Heart right ventricle (tissue), 16 donors: ENCODE measurements at regions of chr3 and their contacts with region 1.

Region 1: DNA sequence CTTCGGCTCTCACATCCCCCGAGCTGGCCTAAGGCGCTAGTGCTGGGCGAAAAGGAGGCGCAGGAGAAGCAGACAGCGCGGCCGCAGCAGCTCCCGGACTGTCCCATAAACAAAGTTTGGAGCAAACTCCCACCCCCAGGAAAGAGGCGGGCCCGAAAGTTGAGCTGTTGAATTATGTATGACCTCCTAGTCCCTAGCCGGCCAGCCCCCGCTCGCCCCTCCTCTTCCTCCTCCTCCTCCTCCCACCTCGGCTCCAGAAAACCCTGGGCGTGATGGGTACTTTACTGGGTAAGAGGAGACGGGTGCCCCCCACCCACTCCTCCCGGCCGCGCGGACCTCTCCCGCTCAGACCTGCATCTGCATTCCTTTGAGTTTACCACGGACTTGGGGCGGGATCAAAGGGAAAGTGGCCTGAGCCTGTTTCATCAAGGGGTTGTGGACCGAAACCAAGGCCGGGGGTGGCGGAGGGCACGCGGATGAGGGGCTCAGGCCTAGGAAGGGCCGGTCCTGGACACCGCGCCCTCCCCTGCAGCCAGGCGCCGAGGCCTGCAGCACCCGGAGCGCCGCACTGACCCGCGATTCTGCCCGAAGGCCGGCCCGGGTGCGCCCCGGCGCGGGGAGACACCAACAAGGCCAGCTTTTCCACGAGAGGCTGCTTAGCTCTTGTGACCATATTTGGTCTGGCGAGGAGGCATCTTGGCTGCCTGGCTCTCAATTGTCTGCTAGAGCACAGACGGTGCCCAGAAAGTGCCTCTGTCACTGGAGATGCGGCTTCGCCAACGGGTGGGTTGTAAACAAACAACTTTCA is at the start of gene WWTR1:
- DNase-seq: peak; percentile 91 to 97
- ATAC-seq: peak; percentile 88 to 95 (median 92)
- H3K4me3 ChIP-seq: peak within 1 kb of the TSS; percentile 45 to 96 (median 87)
- H3K27ac ChIP-seq: peak within 1 kb of the TSS; percentile 95 to 99 (median 98)
- H3K4me1 ChIP-seq: peaks cover 2 to 53% (median 44%) of the 10 kb centered on the region in 9 donors
- H3K27me3 ChIP-seq: peaks cover 0 to 58% (median 0%) of the 10 kb centered on the region in 7 donors
- CTCF ChIP-seq: peak in 6 of 9 donors; percentile 12 to 62 (median 44)
- total RNA-seq, gene WWTR1: 30.3 to 78.6 (median 43.7) TPM

Region 2: DNA sequence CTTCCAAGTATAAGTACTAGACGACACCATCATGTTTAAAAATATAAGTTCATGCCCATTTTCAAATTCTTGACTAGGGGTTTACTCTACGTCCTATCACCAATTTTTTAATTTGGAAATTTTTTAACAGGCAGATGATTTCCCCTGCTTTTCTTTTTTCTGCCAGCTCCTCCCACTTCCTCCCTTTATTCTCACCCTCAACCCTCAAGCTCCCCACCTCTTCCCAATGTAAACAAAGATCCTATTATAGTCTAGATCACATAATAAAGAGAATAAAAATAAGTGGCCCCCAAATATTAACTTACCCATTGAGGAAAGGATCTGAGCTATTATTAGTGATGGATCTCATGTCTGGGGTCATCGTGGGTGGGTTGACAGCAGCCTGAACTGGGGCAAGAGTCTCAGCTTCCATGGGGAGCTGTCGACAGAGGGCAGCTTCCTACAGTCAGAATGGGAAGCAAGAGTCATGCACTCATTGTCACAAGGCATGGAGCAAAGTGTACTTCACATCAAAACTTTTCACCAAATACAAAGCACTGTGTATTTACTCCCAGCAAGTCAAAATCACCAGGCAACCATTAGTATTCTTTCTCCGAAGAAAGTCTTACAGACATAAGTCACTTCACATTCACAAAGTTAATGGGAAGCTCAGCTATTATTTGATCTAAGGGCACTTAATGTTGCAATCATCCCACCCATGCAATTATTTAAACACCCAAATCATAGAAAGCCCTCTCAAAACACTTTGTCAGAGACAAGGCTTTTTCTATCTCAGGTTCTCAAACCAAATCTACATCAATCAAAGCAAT is 130.4 kb before region 1 on chr3:
- intact Hi-C with region 1: loop called in 9 of 10 experiments (anchors 2 to 10 kb)
- DNase-seq: peak in 1 of 2 donors; percentile 36
- ATAC-seq: peak; percentile 65 to 86 (median 70)
- H3K4me3 ChIP-seq: no peak overlapping the region
- H3K27ac ChIP-seq: peak overlapping the region in 6 of 10 donors; percentile 10 to 62 (median 36)
- H3K4me1 ChIP-seq: peaks cover under 1 to 55% (median 22%) of the 10 kb centered on the region in 9 donors
- H3K27me3 ChIP-seq: no peaks in the 10 kb centered on the region
- CTCF ChIP-seq: peak in 7 of 9 donors; percentile 22 to 68 (median 44)

Region 3: GRCh38 chr3:149547938-149548668 is 110.0 kb before region 1 on chr3:
- intact Hi-C with region 1: loop called in 1 of 10 experiments (anchors 5 kb)
- DNase-seq: no peak
- ATAC-seq: peak; percentile 50 to 93 (median 69)
- H3K4me3 ChIP-seq: peak overlapping the region in 1 of 10 donors; percentile 14
- H3K27ac ChIP-seq: peak overlapping the region in 9 of 10 donors; percentile 53 to 83 (median 68)
- H3K4me1 ChIP-seq: peaks cover 0 to 53% (median 24%) of the 10 kb centered on the region in 9 donors
- H3K27me3 ChIP-seq: no peaks in the 10 kb centered on the region
- CTCF ChIP-seq: no peak

Region 4: GRCh38 chr3:149581681-149582370 is 76.3 kb before region 1 on chr3:
- intact Hi-C with region 1: loop called in 9 of 10 experiments (anchors 5 to 10 kb)
- DNase-seq: no peak
- ATAC-seq: peak; percentile 34 to 88 (median 65)
- H3K4me3 ChIP-seq: no peak overlapping the region
- H3K27ac ChIP-seq: peak overlapping the region in 7 of 10 donors; percentile 15 to 77 (median 41)
- H3K4me1 ChIP-seq: peaks cover 11 to 94% (median 81%) of the 10 kb centered on the region in 9 donors
- H3K27me3 ChIP-seq: peaks cover 0 to 7% (median 0%) of the 10 kb centered on the region in 7 donors
- CTCF ChIP-seq: no peak

Region 5: GRCh38 chr3:149618151-149619123 is 39.7 kb before region 1 on chr3:
- intact Hi-C with region 1: loop called in 6 of 10 experiments (anchors 5 kb)
- DNase-seq: peak; percentile 42 to 71
- ATAC-seq: peak; percentile 54 to 93 (median 84)
- H3K4me3 ChIP-seq: no peak overlapping the region
- H3K27ac ChIP-seq: peak overlapping the region in 9 of 10 donors; percentile 17 to 72 (median 57)
- H3K4me1 ChIP-seq: peaks cover 5 to 90% (median 74%) of the 10 kb centered on the region in 9 donors
- H3K27me3 ChIP-seq: peaks cover 0 to 71% (median 0%) of the 10 kb centered on the region in 7 donors
- CTCF ChIP-seq: no peak

Region 6: DNA sequence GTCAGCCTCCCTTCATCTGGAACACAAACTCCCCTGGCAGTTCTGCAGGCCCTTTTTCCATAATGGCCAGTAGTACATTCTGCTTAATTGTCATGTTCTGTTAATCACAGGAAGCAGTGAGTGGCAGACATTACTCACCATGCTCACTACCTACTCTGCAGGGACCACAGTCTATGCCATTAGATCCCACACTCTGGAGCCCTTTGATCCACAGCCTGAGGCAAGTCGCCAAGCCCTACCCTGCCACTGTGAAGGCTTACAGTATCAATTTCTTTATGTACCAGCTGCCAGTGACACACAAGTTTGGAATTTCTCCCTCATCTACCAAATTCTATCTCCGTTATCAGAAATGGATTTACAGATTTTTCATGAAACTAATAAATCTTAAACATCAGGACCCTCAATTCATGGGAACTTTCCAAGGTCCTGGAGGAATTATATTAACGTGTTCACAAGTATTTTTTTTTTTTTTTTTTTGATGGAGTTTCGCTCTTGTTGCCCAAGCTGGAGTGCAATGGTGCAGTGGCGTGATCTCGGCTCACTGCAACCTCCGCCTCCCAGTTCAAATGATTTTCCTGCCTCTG is 20.3 kb after region 1 on chr3:
- intact Hi-C with region 1: no loop called
- DNase-seq: no peak
- ATAC-seq: no peak
- H3K4me3 ChIP-seq: no peak overlapping the region
- H3K27ac ChIP-seq: no peak overlapping the region
- H3K4me1 ChIP-seq: no peaks in the 10 kb centered on the region
- H3K27me3 ChIP-seq: no peaks in the 10 kb centered on the region
- CTCF ChIP-seq: no peak